Endothelial cell of umbilical vein (primary cell): ENCODE measurements at regions of chr10 and their contacts with region 1.

Region 1: GRCh38 chr10:103396064-103396788 is at the starts of genes ATP5MK and PDCD11:
- DNase-seq: peak; percentile 99
- H3K4me3 ChIP-seq: peak within 1 kb of the TSS; percentile 65 to 89 (median 81)
- H3K27ac ChIP-seq: peak within 1 kb of the TSS; percentile 70
- H3K4me1 ChIP-seq: peaks cover 16% of the 10 kb centered on the region
- H3K27me3 ChIP-seq: no peaks in the 10 kb centered on the region
- CTCF ChIP-seq: peak in 1 of 2 donors; percentile 31
- POLR2A ChIP-seq: peak; percentile 96
- total RNA-seq, gene ATP5MK: 369 and 407 TPM in 2 replicates
- total RNA-seq, gene PDCD11: 52.7 and 56.2 TPM in 2 replicates

Region 2: DNA sequence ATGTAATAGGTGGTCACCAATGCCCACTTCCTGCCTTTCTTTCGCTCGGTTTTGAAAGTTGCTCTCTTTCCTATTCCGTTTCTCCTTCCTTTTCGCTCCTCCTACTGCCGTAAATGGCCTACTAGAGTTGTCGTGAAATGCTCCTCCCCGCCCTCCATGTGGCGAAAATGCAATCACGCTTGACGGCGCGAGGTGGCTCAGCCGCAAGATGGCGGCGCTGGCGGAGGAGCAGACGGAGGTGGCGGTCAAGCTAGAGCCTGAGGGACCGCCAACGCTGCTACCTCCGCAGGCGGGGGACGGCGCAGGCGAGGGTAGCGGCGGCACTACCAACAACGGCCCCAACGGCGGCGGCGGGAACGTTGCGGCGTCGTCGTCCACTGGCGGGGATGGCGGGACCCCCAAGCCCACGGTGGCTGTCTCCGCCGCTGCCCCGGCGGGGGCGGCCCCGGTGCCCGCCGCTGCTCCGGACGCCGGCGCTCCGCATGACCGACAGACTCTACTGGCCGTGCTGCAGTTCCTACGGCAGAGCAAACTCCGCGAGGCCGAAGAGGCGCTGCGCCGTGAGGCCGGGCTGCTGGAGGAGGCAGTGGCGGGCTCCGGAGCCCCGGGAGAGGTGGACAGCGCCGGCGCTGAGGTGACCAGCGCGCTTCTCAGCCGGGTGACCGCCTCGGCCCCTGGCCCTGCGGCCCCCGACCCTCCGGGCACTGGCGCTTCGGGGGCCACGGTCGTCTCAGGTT is 28.3 kb before region 1 on chr10 and contains the start of gene TAF5:
- CTCF ChIA-PET with region 1: interaction called, 5 read pairs
- POLR2A ChIA-PET with region 1: no interaction called
- dilution Hi-C with region 1: no loop called
- intact Hi-C with region 1: loop called (anchors 1 kb)
- DNase-seq: peak; percentile 96
- H3K4me3 ChIP-seq: peak within 1 kb of the TSS; percentile 90 to 97 (median 91)
- H3K27ac ChIP-seq: no peak within 1 kb of the TSS
- H3K4me1 ChIP-seq: peaks cover 8% of the 10 kb centered on the region
- H3K27me3 ChIP-seq: no peaks in the 10 kb centered on the region
- CTCF ChIP-seq: no peak
- POLR2A ChIP-seq: peak; percentile 81
- total RNA-seq, gene TAF5: 5.8 and 6.0 TPM in 2 replicates

Region 3: GRCh38 chr10:103433858-103434257 is 37.6 kb after region 1 on chr10:
- CTCF ChIA-PET with region 1: no interaction called
- POLR2A ChIA-PET with region 1: no interaction called
- dilution Hi-C with region 1: no loop called
- intact Hi-C with region 1: no loop called
- DNase-seq: no peak
- H3K4me3 ChIP-seq: no peak overlapping the region
- H3K27ac ChIP-seq: no peak overlapping the region
- H3K4me1 ChIP-seq: peaks cover 5% of the 10 kb centered on the region
- H3K27me3 ChIP-seq: no peaks in the 10 kb centered on the region
- CTCF ChIP-seq: no peak
- POLR2A ChIP-seq: no peak